ENCODE measurements at regions of chr13 and their contacts with region 1.

Region 1: GRCh38 chr13:21638319-21639282 is 32.3 kb upstream of the FGF9 start:
- DNase-seq: peak; percentile 28
- H3K4me3 ChIP-seq: no peak overlapping the region
- H3K27ac ChIP-seq: no peak overlapping the region
- H3K4me1 ChIP-seq: no peaks in the 10 kb centered on the region
- H3K27me3 ChIP-seq: no peaks in the 10 kb centered on the region
- CTCF ChIP-seq: peak; percentile 30 to 59
- POLR2A ChIP-seq: no peak

Region 2: GRCh38 chr13:21557995-21558394 is 80.6 kb before region 1 on chr13:
- CTCF ChIA-PET with region 1: interaction called, 11 read pairs
- POLR2A ChIA-PET with region 1: no interaction called
- dilution Hi-C with region 1: no loop called
- intact Hi-C with region 1: no loop called
- DNase-seq: peak; percentile 7
- H3K4me3 ChIP-seq: no peak overlapping the region
- H3K27ac ChIP-seq: no peak overlapping the region
- H3K4me1 ChIP-seq: no peaks in the 10 kb centered on the region
- H3K27me3 ChIP-seq: no peaks in the 10 kb centered on the region
- CTCF ChIP-seq: peak; percentile 36 to 54
- POLR2A ChIP-seq: no peak

Region 3: DNA sequence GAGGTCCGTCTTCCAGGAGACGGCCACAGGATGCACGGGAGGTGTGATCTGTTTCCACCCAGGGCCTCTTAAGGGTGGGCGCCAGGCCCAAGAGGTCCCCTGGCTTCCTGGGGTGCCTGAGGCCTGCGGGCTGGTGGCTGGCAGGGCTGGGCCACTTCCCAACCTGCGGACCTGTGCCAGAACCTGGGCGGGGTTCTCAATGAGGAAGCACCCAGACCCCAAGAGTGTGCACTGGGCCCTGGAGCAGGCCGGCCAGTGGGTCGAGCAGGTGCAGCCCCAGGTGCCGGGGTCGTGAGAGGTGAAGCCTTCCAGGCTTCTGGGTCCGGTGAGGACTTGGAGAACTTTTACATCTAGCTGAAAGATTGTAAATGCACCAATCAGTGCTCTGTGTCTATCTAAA is 27.9 kb before region 1 on chr13:
- CTCF ChIA-PET with region 1: interaction called, 13 read pairs
- POLR2A ChIA-PET with region 1: no interaction called
- dilution Hi-C with region 1: no loop called
- intact Hi-C with region 1: no loop called
- DNase-seq: no peak
- H3K4me3 ChIP-seq: no peak overlapping the region
- H3K27ac ChIP-seq: no peak overlapping the region
- H3K4me1 ChIP-seq: no peaks in the 10 kb centered on the region
- H3K27me3 ChIP-seq: peaks cover 8 to 26% of the 10 kb centered on the region in 2 experiments
- CTCF ChIP-seq: no peak
- POLR2A ChIP-seq: no peak

Region 4: DNA sequence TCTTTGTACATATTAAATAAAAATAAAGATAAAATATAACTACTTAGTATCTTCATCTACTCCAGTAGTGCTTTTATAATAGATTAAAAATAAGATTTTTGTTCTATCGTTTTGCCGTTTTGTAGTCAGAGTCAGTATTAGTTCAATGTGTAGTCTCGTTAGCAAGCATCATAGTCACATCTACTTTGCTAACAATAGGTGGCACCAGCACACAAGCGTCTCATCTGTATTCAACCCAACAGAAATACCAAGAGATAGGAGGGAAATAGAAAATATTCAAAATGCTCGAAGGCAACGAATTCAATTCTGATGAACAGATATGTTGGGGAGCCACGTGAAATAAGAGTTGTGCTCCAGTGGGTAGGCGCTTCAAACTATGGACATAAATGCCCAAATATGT is 13.2 kb before region 1 on chr13:
- CTCF ChIA-PET with region 1: interaction called, 48 read pairs
- POLR2A ChIA-PET with region 1: no interaction called
- dilution Hi-C with region 1: no loop called
- intact Hi-C with region 1: no loop called
- DNase-seq: peak; percentile 11
- H3K4me3 ChIP-seq: no peak overlapping the region
- H3K27ac ChIP-seq: no peak overlapping the region
- H3K4me1 ChIP-seq: no peaks in the 10 kb centered on the region
- H3K27me3 ChIP-seq: peaks cover 0 to 4% of the 10 kb centered on the region in 2 experiments
- CTCF ChIP-seq: no peak
- POLR2A ChIP-seq: no peak

Region 5: GRCh38 chr13:21670883-21671619 is 32.5 kb after region 1 on chr13 and contains the start of gene FGF9:
- CTCF ChIA-PET with region 1: interaction called, 27 read pairs
- POLR2A ChIA-PET with region 1: no interaction called
- dilution Hi-C with region 1: no loop called
- intact Hi-C with region 1: no loop called
- DNase-seq: peak; percentile 54
- H3K4me3 ChIP-seq: peak within 1 kb of the TSS; percentile 23 to 34 (median 32)
- H3K27ac ChIP-seq: no peak within 1 kb of the TSS
- H3K4me1 ChIP-seq: peaks cover 19% of the 10 kb centered on the region
- H3K27me3 ChIP-seq: peaks cover 46 to 74% of the 10 kb centered on the region in 2 experiments
- CTCF ChIP-seq: no peak
- POLR2A ChIP-seq: no peak
- total RNA-seq, gene FGF9: not detected in 2 replicates

Region 6: DNA sequence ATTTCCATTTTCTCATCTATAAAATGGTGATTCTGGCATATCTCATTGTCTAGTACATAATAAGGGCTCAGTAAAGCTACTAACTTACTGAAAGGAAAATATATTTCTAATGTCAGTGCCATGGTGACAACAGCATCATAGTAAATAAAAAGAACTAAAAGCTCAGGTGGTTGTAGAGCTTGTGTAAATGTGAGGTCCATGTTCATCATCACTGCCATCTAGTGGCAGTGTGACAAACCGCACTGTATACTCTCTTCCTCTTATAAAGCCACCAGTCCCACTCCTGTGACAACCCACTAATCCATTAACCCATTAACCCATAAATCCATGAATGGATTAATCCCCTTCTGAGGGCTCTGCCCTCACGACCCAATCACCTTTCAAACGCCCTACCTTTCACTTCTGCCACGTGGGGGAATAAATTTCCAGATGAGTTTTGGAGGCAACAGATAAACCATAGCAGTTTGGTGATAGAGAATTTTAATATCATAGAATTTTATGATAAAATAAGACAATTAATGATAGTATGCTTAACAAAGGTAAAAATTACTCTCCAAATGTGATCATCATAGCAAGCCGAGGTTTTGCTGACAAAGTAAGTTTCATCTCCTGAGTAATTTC is 1381.7 kb after region 1 on chr13:
- CTCF ChIA-PET with region 1: interaction called, 37 read pairs
- POLR2A ChIA-PET with region 1: no interaction called
- dilution Hi-C with region 1: no loop called
- intact Hi-C with region 1: no loop called
- DNase-seq: peak; percentile 58
- H3K4me3 ChIP-seq: no peak overlapping the region
- H3K27ac ChIP-seq: no peak overlapping the region
- H3K4me1 ChIP-seq: no peaks in the 10 kb centered on the region
- H3K27me3 ChIP-seq: no peaks in the 10 kb centered on the region
- CTCF ChIP-seq: peak; percentile 71 to 81
- POLR2A ChIP-seq: no peak

Region 7: GRCh38 chr13:23321535-23322241 is 1683.1 kb after region 1 on chr13:
- CTCF ChIA-PET with region 1: interaction called, 45 read pairs
- POLR2A ChIA-PET with region 1: no interaction called
- dilution Hi-C with region 1: no loop called
- intact Hi-C with region 1: loop called (anchors 1 kb)
- DNase-seq: peak; percentile 92
- H3K4me3 ChIP-seq: peak overlapping the region in 1 of 3 experiments; percentile 30
- H3K27ac ChIP-seq: peak overlapping the region; percentile 98
- H3K4me1 ChIP-seq: peaks cover 41% of the 10 kb centered on the region
- H3K27me3 ChIP-seq: no peaks in the 10 kb centered on the region
- CTCF ChIP-seq: no peak
- POLR2A ChIP-seq: no peak